HCT116 (cell line): ENCODE measurements at regions of chr6 and their contacts with region 1.

Region 1: GRCh38 chr6:29649701-29650673 is 6.9 kb upstream of the MOG start:
- DNase-seq: peak; percentile 98
- ATAC-seq: peak; percentile 92
- H3K4me3 ChIP-seq: peak overlapping the region; percentile 46 to 54
- H3K27ac ChIP-seq: peak overlapping the region; percentile 54
- H3K4me1 ChIP-seq: peaks cover 6 to 15% of the 10 kb centered on the region in 2 experiments; a peak in 3 of 4 replicates
- H3K27me3 ChIP-seq: no peaks in the 10 kb centered on the region
- CTCF ChIP-seq: peak; percentile 75 to 91 (median 90)
- POLR2A ChIP-seq: peak; percentile 91
- RAD21 ChIP-seq: peak; percentile 27

Region 2: DNA sequence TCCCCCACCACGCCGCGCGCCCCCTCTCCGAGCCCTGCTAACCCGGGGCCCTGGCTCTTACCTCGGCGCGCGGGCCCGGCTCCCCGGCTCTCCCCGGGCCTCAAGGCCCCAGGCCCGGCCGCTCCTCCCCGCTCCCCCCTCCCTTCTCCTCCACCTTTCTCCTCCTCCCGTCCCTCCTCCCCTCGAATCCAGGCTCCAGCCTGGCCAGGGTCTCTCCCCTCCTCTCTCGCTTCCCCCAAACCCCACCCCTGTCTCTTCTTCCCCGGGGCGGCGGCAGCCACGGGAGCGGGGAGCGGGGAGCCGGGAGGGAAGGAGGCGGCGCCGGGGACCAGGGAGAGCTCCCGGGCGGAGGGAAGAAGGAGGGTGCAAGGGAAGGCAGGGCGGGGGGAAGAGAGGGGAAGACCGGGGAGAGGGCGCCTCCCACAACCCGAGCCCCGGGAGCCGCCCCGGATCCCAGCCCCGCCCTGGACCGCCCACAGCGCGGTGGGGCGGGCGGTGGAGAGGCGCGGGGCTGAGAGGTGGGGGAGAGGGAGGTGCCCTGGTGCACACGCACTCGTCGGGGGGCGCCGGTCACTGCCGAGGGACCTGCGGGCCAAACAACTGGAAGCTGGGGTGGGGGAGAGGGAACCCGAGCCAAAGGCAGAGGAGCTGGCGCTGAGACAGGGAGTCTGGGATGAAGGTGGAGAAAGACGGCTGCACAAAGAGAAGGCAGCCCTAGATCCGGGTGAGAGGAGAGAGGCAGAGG is 17.0 kb before region 1 on chr6 and contains the start of gene GABBR1:
- CTCF ChIA-PET with region 1: interaction called, 35 read pairs
- POLR2A ChIA-PET with region 1: interaction called, 5 read pairs
- RAD21 ChIA-PET with region 1: no interaction called
- intact Hi-C with region 1: no loop called
- DNase-seq: peak; percentile 41
- ATAC-seq: peak; percentile 93
- H3K4me3 ChIP-seq: peak within 1 kb of the TSS; percentile 60 to 75
- H3K27ac ChIP-seq: peak within 1 kb of the TSS; percentile 60; the same call in 1 of the 2 replicates
- H3K4me1 ChIP-seq: peaks cover 7 to 22% of the 10 kb centered on the region in 2 experiments
- H3K27me3 ChIP-seq: no peaks in the 10 kb centered on the region
- CTCF ChIP-seq: no peak
- POLR2A ChIP-seq: peak; percentile 25
- RAD21 ChIP-seq: no peak
- total RNA-seq, gene GABBR1: 43.4 TPM

Region 3: GRCh38 chr6:29665942-29666825 is 16.2 kb after region 1 on chr6:
- CTCF ChIA-PET with region 1: interaction called, 70 read pairs
- POLR2A ChIA-PET with region 1: interaction called, 3 read pairs
- RAD21 ChIA-PET with region 1: no interaction called
- intact Hi-C with region 1: no loop called
- DNase-seq: no peak
- ATAC-seq: no peak
- H3K4me3 ChIP-seq: no peak overlapping the region
- H3K27ac ChIP-seq: no peak overlapping the region
- H3K4me1 ChIP-seq: no peaks in the 10 kb centered on the region
- H3K27me3 ChIP-seq: no peaks in the 10 kb centered on the region
- CTCF ChIP-seq: no peak
- POLR2A ChIP-seq: no peak
- RAD21 ChIP-seq: no peak

Region 4: GRCh38 chr6:29696155-29697125 is 46.5 kb after region 1 on chr6:
- CTCF ChIA-PET with region 1: interaction called, 96 read pairs
- POLR2A ChIA-PET with region 1: interaction called, 8 read pairs
- RAD21 ChIA-PET with region 1: interaction called, 5 to 8 read pairs
- intact Hi-C with region 1: loop called (anchors 2 kb)
- DNase-seq: no peak
- ATAC-seq: peak; percentile 84
- H3K4me3 ChIP-seq: no peak overlapping the region
- H3K27ac ChIP-seq: no peak overlapping the region
- H3K4me1 ChIP-seq: no peaks in the 10 kb centered on the region
- H3K27me3 ChIP-seq: no peaks in the 10 kb centered on the region
- CTCF ChIP-seq: peak; percentile 46 to 85 (median 70); a peak in 5 of 6 replicates
- POLR2A ChIP-seq: no peak
- RAD21 ChIP-seq: peak; percentile 42

Region 5: GRCh38 chr6:29834564-29835436 is 184.8 kb after region 1 on chr6:
- CTCF ChIA-PET with region 1: interaction called, 5 read pairs
- POLR2A ChIA-PET with region 1: no interaction called
- RAD21 ChIA-PET with region 1: no interaction called
- intact Hi-C with region 1: loop called (anchors 2 kb)
- DNase-seq: no peak
- ATAC-seq: peak; percentile 91
- H3K4me3 ChIP-seq: no peak overlapping the region
- H3K27ac ChIP-seq: no peak overlapping the region
- H3K4me1 ChIP-seq: no peaks in the 10 kb centered on the region
- H3K27me3 ChIP-seq: peaks cover 3% of the 10 kb centered on the region; the same call in 1 of the 2 replicates
- CTCF ChIP-seq: peak; percentile 93 to 96 (median 93)
- POLR2A ChIP-seq: no peak
- RAD21 ChIP-seq: peak; percentile 98